ENCODE measurements at regions of chr4 and their contacts with region 1.

Region 1: DNA sequence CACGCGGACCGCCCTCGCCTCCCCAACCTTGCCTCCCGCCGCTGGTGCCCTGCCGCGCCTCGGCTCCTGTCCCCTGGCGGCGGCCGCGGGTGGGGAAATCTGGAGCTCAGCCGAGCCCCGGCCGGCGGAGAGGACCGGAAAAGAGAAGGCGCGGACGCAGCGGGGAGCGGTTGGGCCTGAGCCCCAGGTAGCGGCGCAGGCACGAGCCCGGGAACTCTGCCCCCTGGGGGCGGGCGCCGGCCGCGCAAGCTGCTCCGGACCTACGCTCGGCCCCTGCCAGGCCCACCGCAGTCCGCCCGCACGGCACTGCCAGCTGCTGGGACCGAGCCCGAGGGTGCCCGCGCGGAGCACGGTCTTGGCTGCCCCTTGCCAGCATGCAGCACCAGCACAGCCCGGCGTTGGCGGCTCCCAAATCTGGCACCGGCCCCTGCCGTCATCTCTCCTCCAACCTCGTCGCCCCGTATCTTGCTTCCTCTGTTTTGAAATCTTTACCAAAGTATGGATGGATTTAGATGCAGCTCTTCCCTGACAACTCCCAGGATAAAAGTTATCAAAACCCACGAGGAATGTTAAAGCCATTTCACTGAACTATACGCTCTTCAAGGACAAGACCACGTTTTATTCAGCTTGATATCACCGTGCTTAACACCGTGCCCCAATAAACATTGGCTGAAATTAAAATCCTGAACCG is at the start of gene PRSS12:
- DNase-seq: peak; percentile 83

Region 2: GRCh38 chr4:118363166-118363565 is 10.2 kb after region 1 on chr4:
- CTCF ChIA-PET with region 1: interaction called, 10 read pairs
- POLR2A ChIA-PET with region 1: no interaction called
- DNase-seq: no peak

Measured in HEK293T (cell line).